ENCODE measurements at regions of chr2 and their contacts with region 1.

Region 1: DNA sequence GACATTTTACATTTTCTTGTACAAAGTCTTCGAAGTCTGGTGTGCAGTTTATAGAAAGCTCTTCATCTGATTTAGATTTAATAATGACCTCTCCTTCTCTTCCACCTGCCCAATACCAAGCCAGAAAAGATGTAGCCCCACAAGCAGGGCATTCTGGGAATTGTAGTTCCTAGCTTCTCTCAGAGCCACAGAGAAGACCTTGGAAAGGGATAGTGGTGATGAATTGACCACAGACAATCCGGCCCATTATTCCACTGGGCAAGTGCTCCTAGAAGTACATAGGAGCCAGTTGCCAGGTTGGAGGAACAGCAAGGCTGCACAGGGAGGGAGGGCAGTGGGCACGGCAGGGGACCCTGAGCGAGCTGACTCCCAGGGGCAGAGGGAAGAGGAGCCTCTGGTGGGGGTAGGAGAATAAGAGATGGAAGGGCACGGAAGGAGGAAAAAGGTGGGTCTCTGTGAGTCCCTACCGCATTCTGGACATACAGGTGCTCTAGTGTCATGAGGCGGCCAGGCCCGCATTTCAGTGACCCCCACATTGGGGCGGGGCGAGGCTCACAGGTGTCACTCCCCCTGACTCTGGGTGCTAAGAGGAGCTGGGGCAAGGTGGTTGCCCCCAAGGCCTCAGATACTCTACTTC is 152.5 kb upstream of the HAAO start:
- DNase-seq: no peak
- H3K4me3 ChIP-seq: no peak overlapping the region
- H3K27ac ChIP-seq: no peak overlapping the region
- H3K4me1 ChIP-seq: no peaks in the 10 kb centered on the region
- H3K27me3 ChIP-seq: no peaks in the 10 kb centered on the region
- CTCF ChIP-seq: no peak
- POLR2A ChIP-seq: no peak

Region 2: DNA sequence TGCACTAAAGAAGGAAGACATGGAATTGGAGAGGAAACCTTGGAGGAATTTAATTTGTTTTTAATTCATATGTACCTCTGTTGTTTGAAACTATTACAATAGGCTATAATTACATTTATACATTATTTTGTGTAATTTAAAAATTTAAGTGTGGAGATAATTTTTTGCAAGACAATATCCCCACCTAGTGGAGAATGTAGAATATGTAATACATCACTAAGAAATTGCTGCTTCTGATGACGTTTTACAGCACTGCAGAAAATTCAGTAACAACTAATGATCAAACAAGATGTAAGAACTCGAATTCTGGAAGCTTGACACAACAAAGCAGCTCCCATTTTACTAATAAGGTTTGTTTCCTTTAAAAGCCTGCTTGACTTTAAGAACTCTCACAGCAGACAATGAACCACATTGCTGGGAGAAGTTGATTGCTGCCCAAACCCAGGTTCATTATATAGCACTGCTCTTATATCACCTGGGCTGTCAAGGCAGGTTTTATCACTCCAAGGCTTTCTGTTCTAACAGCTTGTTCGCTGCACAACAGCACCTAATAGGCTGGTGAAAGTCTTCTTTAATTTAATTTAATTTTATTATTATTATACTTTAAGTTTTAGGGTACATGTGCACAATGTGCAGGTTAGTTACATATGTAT is 597.5 kb after region 1 on chr2:
- intact Hi-C with region 1: loop called (anchors 5 kb)
- DNase-seq: no peak
- H3K4me3 ChIP-seq: no peak overlapping the region
- H3K27ac ChIP-seq: peak overlapping the region in 1 of 2 donors; percentile 48
- H3K4me1 ChIP-seq: peaks cover 2% of the 10 kb centered on the region
- H3K27me3 ChIP-seq: no peaks in the 10 kb centered on the region
- CTCF ChIP-seq: peak; percentile 56 to 84 (median 77)
- POLR2A ChIP-seq: no peak